ENCODE measurements at regions of chr3 and their contacts with region 1.

Region 1: GRCh38 chr3:121566773-121567172 is 976 bp upstream of the ARGFX start:
- DNase-seq: no peak
- ATAC-seq: no peak
- H3K4me3 ChIP-seq: no peak overlapping the region
- H3K27ac ChIP-seq: no peak overlapping the region
- H3K4me1 ChIP-seq: no peaks in the 10 kb centered on the region
- H3K27me3 ChIP-seq: no peaks in the 10 kb centered on the region; the same call in 1 of the 2 replicates
- CTCF ChIP-seq: no peak

Region 2: DNA sequence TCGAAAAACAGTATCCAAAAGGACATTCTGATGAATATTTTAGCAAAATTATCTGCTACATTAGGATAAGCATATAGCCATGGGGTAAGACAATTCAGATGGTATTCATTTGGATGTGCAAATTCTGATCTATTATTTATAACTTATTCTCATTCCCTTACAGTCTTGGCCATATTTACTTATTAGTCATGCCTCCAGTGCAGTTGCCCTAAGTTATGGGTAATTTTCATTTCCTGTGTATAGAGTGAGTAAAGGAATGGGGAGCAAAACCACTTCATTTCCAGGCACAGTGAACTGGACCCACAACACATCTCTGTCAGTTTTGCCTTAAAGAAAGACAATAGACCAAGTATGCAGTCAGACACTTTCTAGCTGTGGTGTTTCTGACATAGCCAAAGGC is 155.2 kb before region 1 on chr3:
- CTCF ChIA-PET with region 1: no interaction called
- POLR2A ChIA-PET with region 1: interaction called, 18 read pairs
- in situ Hi-C with region 1: no loop called
- intact Hi-C with region 1: no loop called
- DNase-seq: no peak
- ATAC-seq: no peak
- H3K4me3 ChIP-seq: no peak overlapping the region
- H3K27ac ChIP-seq: no peak overlapping the region
- H3K4me1 ChIP-seq: no peaks in the 10 kb centered on the region
- H3K27me3 ChIP-seq: no peaks in the 10 kb centered on the region
- CTCF ChIP-seq: no peak

Region 3: GRCh38 chr3:121703973-121704372 is 137.2 kb after region 1 on chr3:
- CTCF ChIA-PET with region 1: no interaction called
- POLR2A ChIA-PET with region 1: interaction called, 14 read pairs
- in situ Hi-C with region 1: no loop called
- intact Hi-C with region 1: no loop called
- DNase-seq: no peak
- ATAC-seq: no peak
- H3K4me3 ChIP-seq: no peak overlapping the region
- H3K27ac ChIP-seq: no peak overlapping the region
- H3K4me1 ChIP-seq: no peaks in the 10 kb centered on the region
- H3K27me3 ChIP-seq: no peaks in the 10 kb centered on the region
- CTCF ChIP-seq: no peak